Activated naive CD4-positive, alpha-beta T cell treated with anti-CD3 and anti-CD28 coated beads for 36 hours (primary cell): ENCODE measurements at regions of chr3 and their contacts with region 1.

Region 1: GRCh38 chr3:42190701-42191462 is 75.1 kb downstream of the CCK start:
- DNase-seq: peak; percentile 83
- H3K4me3 Mint-ChIP-seq: no peak overlapping the region
- H3K27ac Mint-ChIP-seq: no peak overlapping the region
- H3K4me1 Mint-ChIP-seq: peaks cover 8% of the 10 kb centered on the region
- H3K27me3 Mint-ChIP-seq: no peaks in the 10 kb centered on the region

Region 2: GRCh38 chr3:41893977-41894376 is 296.9 kb before region 1 on chr3:
- CTCF ChIA-PET with region 1: interaction called, 5 read pairs
- intact Hi-C with region 1: loop called (anchors 1 kb)
- DNase-seq: peak; percentile 23
- H3K4me3 Mint-ChIP-seq: no peak overlapping the region
- H3K27ac Mint-ChIP-seq: no peak overlapping the region
- H3K4me1 Mint-ChIP-seq: no peaks in the 10 kb centered on the region
- H3K27me3 Mint-ChIP-seq: no peaks in the 10 kb centered on the region

Region 3: DNA sequence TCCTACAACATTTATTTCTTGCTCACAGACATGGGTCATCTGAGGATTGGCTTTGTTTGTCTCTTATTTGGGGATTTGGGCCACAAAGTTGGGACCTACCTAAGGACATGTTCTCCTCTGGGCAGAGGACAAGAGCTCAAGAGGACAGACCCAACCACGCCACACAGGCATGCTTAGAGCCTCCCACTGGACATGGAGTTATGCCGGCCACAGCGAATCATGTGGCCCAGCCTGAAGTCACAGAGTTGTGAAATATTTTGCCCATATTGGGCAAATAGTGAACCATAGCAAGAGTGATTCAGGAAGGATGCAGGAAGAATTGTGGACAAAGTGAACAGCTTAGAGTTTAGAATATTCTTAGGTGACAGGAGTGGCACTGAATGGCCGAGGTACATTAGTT is 89.8 kb before region 1 on chr3:
- CTCF ChIA-PET with region 1: interaction called, 11 read pairs
- intact Hi-C with region 1: no loop called
- DNase-seq: no peak
- H3K4me3 Mint-ChIP-seq: no peak overlapping the region
- H3K27ac Mint-ChIP-seq: no peak overlapping the region
- H3K4me1 Mint-ChIP-seq: peaks cover 10% of the 10 kb centered on the region
- H3K27me3 Mint-ChIP-seq: no peaks in the 10 kb centered on the region

Region 4: DNA sequence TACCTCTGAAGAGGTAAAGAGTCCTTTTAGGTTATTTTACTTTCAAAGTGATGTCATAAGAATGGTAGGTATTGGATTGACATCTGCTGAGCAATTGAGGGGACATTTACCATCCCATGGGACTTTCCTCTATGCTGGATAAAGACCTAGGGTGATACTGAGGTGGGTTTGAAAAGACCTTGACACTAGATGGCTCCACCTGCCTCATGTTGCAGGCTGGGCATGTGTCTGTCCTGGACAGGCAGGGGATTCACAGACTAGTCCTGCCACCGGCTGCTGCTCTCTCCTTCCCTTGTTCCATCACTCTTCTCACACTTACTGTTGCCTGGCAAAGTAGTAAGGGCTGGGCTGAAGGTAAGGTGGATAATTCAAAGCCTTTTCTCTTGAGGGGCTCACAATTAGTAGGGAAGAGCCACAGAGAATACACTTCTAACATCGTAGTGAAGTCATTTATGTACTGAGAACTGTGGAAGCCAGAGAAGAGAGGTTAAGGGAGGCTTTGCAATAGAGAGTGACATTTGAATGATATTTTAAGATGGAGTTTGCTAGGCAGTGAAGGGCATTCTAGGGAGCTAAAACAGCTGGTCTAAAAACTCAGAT is 72.0 kb before region 1 on chr3:
- CTCF ChIA-PET with region 1: interaction called, 56 read pairs
- intact Hi-C with region 1: loop called (anchors 1 kb)
- DNase-seq: peak; percentile 55
- H3K4me3 Mint-ChIP-seq: no peak overlapping the region
- H3K27ac Mint-ChIP-seq: no peak overlapping the region
- H3K4me1 Mint-ChIP-seq: peaks cover 22% of the 10 kb centered on the region
- H3K27me3 Mint-ChIP-seq: no peaks in the 10 kb centered on the region

Region 5: DNA sequence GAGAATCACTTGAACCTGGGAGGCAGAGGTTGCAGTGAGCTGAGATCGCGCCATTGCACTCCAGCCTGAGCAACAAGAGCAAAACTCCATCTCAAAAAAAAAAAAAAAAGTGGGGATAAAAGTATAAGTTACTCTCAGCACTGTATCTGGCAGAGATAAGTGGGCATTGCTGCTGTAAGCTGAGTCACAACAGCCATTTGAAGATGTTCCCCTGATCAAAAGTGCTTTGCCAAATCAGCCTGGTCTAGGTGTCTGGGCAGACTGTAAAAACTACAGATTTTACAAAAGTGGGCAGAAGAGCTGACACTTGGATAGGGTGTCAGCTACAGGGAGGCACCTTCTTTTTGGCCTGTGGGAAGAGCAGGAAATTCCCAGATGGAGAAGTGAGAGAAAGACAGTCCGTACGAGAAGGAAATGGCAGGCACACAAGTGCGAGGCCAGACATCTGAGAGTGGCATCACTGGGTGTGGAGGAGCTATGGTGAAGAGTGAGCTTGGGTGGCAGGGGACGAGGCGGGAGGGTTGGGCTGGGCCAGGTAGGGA is 21.2 kb before region 1 on chr3:
- CTCF ChIA-PET with region 1: interaction called, 14 read pairs
- intact Hi-C with region 1: no loop called
- DNase-seq: no peak
- H3K4me3 Mint-ChIP-seq: no peak overlapping the region
- H3K27ac Mint-ChIP-seq: no peak overlapping the region
- H3K4me1 Mint-ChIP-seq: peaks cover 26% of the 10 kb centered on the region
- H3K27me3 Mint-ChIP-seq: no peaks in the 10 kb centered on the region

Region 6: GRCh38 chr3:42204660-42205599 is 14.0 kb after region 1 on chr3:
- CTCF ChIA-PET with region 1: interaction called, 27 read pairs
- intact Hi-C with region 1: no loop called
- DNase-seq: no peak
- H3K4me3 Mint-ChIP-seq: no peak overlapping the region
- H3K27ac Mint-ChIP-seq: no peak overlapping the region
- H3K4me1 Mint-ChIP-seq: no peaks in the 10 kb centered on the region
- H3K27me3 Mint-ChIP-seq: no peaks in the 10 kb centered on the region

Region 7: DNA sequence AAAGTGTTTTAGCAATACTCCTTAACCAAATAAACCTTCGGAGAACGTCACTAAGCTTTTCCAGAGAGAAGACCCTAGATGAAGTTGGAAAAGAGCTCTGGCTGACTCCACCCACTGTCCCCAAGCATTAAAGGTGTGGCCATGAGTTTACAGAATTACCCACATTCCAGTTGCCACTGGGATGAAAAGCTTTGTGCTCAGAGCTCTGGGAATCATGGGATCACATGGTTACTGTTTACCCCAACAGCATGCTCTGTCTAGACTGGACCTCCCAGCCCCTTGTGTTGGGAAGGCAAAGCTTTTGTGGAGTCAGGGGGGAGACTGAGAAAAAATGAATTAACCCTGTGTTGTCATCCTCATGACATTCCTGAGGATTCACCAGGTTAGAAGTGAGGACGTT is 19.9 kb after region 1 on chr3:
- CTCF ChIA-PET with region 1: interaction called, 14 read pairs
- intact Hi-C with region 1: no loop called
- DNase-seq: no peak
- H3K4me3 Mint-ChIP-seq: no peak overlapping the region
- H3K27ac Mint-ChIP-seq: no peak overlapping the region
- H3K4me1 Mint-ChIP-seq: peaks cover 29% of the 10 kb centered on the region
- H3K27me3 Mint-ChIP-seq: no peaks in the 10 kb centered on the region